ENCODE measurements at regions of chr2 and their contacts with region 1.

Region 1: DNA sequence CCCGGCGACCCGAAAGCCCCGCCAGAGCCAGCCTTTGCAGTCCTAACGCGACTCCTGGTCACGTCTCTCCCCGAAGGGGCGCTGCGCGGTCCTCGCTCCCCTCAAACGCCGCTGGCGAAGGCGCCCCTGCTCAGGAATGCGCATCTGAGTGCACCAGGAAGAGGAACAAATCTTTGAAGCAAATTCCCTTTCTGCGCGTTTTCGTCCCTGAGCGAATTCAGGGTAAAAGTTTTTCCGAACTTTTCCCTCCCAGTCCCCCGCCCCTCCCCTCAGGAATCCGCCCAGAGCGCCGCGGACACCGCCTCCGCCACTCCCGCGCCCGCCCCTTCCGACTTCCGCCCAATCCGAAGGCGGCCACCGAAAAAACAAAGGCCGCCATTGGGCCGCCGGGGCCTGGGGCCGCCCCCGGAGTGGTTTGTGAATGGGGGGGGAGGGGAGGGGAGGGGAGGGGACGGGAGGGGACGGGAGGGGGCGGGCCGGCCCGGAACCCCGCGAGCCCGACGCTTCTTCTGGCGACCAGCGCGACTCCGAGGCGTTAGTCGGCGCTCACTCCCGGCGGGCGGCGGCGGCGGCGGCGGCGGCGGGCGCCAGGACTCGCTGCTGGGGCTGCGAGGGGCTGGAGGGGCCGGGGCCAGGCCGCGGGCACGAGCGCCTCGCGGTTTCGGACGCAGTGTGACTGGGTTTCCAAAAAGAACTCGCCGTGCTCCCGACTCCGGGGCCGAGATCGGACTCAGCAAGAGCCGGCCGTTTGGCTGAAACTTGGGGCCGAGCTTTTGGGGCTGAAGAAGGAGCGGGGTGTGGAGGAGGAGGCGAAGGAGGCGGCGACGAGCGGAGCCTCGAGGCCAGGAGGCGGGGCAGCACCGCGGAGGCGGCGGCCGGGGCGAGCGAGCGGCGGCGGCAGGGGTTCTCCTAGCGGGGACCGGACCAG is at the start of gene FZD7:
- DNase-seq: peak; percentile 95 to 98 (median 97)
- ATAC-seq: peak; percentile 94 to 96
- H3K4me3 ChIP-seq: peak within 1 kb of the TSS; percentile 68
- H3K27ac ChIP-seq: peak within 1 kb of the TSS; percentile 97
- H3K4me1 ChIP-seq: no peaks in the 10 kb centered on the region
- H3K27me3 ChIP-seq: no peaks in the 10 kb centered on the region
- total RNA-seq, gene FZD7: 15.2 to 34.3 (median 27.9) TPM

Region 2: DNA sequence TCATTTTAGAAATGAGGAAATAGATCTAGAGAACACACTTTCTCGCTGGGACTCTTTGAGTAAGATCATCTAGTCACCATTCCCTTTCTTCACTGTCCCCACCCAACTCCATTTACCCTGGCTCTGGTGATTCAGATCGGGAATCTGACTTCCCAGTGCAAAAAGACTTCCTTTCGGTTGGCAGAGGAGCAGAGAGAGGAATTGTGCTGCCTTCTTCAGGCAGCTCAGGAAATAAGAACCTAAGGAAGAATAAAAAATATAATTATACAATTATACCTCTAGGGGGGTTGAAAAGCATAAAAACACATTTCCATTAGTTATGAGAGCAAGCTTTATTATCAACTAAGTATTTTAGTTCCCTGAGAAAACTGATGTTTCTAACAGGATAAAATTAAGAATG is 325.8 kb before region 1 on chr2:
- intact Hi-C with region 1: no loop called
- DNase-seq: no peak
- ATAC-seq: no peak
- H3K4me3 ChIP-seq: no peak overlapping the region
- H3K27ac ChIP-seq: no peak overlapping the region
- H3K4me1 ChIP-seq: no peaks in the 10 kb centered on the region
- H3K27me3 ChIP-seq: no peaks in the 10 kb centered on the region

Region 3: GRCh38 chr2:201860636-201861066 is 172.9 kb before region 1 on chr2:
- intact Hi-C with region 1: loop called in 2 of 4 experiments (anchors 5 to 10 kb)
- DNase-seq: peak in 2 of 3 donors; percentile 19 to 55
- ATAC-seq: peak; percentile 82 to 89
- H3K4me3 ChIP-seq: no peak overlapping the region
- H3K27ac ChIP-seq: no peak overlapping the region
- H3K4me1 ChIP-seq: no peaks in the 10 kb centered on the region
- H3K27me3 ChIP-seq: no peaks in the 10 kb centered on the region

Region 4: GRCh38 chr2:201871471-201871870 is 162.1 kb before region 1 on chr2:
- intact Hi-C with region 1: no loop called
- DNase-seq: no peak
- ATAC-seq: no peak
- H3K4me3 ChIP-seq: no peak overlapping the region
- H3K27ac ChIP-seq: no peak overlapping the region
- H3K4me1 ChIP-seq: no peaks in the 10 kb centered on the region
- H3K27me3 ChIP-seq: no peaks in the 10 kb centered on the region

Region 5: GRCh38 chr2:201882353-201883090 is 151.1 kb before region 1 on chr2:
- intact Hi-C with region 1: loop called in 2 of 4 experiments (anchors 10 kb)
- DNase-seq: peak in 2 of 3 donors; percentile 37 to 70
- ATAC-seq: no peak
- H3K4me3 ChIP-seq: no peak overlapping the region
- H3K27ac ChIP-seq: no peak overlapping the region
- H3K4me1 ChIP-seq: peaks cover 10% of the 10 kb centered on the region
- H3K27me3 ChIP-seq: no peaks in the 10 kb centered on the region

Region 6: DNA sequence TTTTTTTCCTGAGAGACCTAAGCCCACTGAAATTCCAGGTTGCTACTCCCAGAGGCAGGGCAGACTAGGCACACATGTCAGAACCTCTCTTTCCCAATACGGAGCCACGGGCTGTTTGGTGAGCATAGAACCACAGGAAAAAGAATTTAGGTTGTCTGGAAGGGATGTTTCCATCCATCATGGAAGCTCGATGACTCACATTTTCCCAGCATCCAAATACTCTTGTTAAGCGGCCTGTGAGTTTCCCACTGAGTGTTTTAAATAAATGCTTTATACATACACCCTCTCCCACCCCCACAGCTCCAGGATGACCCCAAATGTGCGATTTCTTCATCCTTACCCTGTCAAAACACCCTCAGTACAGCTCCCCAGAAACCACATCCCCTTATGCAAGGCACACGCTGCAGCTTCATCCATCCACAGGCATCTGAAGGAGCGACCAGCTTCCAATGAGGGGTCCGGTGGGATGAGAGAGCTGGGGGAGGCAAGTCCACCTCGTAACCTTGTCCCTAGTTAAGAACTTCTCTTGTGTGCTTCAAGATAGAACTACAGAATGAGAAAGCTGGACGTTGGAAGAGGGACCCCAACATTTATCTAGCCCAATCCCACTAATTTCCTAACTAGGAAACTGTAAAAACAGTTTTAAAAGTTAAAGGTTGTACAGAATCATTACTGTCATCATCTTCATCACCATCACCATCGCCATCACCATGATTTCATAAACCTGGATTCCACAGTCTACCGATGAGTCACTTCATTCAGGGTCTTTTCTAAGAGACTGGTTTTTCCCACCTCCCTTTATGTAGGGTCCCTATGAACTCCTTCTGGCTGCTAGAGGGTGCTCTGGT is 63.4 kb before region 1 on chr2:
- intact Hi-C with region 1: loop called in 1 of 4 experiments (anchors 2 kb)
- DNase-seq: no peak
- ATAC-seq: no peak
- H3K4me3 ChIP-seq: no peak overlapping the region
- H3K27ac ChIP-seq: no peak overlapping the region
- H3K4me1 ChIP-seq: no peaks in the 10 kb centered on the region
- H3K27me3 ChIP-seq: no peaks in the 10 kb centered on the region

Region 7: GRCh38 chr2:202161151-202161835 is 127.7 kb after region 1 on chr2:
- intact Hi-C with region 1: no loop called
- DNase-seq: no peak
- ATAC-seq: peak in 1 of 2 donors; percentile 38
- H3K4me3 ChIP-seq: no peak overlapping the region
- H3K27ac ChIP-seq: peak overlapping the region; percentile 38
- H3K4me1 ChIP-seq: no peaks in the 10 kb centered on the region
- H3K27me3 ChIP-seq: no peaks in the 10 kb centered on the region

Region 8: DNA sequence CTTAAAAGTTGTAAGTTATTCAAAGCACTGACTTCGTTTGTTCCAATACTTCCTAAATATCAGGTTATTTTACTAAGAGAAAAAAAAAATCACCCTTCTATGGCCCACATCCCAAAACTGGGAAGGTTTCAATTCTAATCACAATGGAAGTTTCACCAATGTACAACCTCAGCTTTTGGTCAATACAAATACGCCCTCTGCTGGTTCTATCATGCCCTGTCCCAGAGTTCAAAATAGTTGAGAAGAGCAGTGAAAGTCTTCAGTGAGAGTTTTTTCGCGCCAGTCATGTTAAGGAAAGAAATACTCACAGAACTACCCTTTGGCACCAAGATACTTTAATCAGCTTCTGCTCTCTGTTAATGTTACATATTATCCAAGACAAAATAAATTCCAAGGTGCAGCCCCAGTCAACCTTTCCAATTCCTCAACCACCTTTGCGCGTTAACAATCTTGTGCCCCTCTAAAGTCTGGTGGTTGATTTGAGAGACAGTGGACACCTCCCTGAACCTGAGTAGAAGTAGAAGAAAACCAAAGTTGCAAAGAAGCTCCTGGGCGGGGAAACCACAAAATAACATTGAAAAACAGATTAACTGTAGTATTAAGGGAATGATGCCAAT is 144.9 kb after region 1 on chr2:
- intact Hi-C with region 1: loop called in 3 of 4 experiments (anchors 10 kb)
- DNase-seq: no peak
- ATAC-seq: peak; percentile 77 to 84
- H3K4me3 ChIP-seq: no peak overlapping the region
- H3K27ac ChIP-seq: no peak overlapping the region
- H3K4me1 ChIP-seq: no peaks in the 10 kb centered on the region
- H3K27me3 ChIP-seq: no peaks in the 10 kb centered on the region

Region 9: DNA sequence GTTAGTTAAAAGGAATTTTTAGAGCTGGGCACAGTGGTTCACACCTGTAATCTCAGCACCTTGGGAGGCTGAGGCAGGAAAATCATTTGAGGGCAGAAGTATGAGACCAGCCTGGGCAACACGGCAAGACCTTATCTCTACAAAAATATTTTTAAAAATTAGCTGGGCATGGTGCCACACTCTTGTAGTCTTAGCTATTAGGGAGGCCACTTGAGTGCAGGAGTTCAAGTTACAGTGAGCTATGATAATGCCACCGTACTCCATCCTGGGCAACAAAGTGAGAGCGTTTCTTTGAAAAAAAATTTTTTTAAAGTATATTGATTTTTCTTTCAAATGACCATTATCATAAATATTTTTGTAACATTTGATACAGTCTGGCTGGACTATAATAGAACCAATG is 507.6 kb after region 1 on chr2:
- intact Hi-C with region 1: no loop called
- DNase-seq: no peak
- ATAC-seq: peak; percentile 77 to 90
- H3K4me3 ChIP-seq: no peak overlapping the region
- H3K27ac ChIP-seq: no peak overlapping the region
- H3K4me1 ChIP-seq: no peaks in the 10 kb centered on the region
- H3K27me3 ChIP-seq: no peaks in the 10 kb centered on the region